A549 (cell line): ENCODE measurements at regions of chr17 and their contacts with region 1.

Region 1: GRCh38 chr17:19648475-19649406 is at the start of gene ALDH3A2:
- DNase-seq: peak; percentile 99
- ATAC-seq: peak; percentile 89 to 94
- H3K4me3 ChIP-seq: peak within 1 kb of the TSS; percentile 82
- H3K27ac ChIP-seq: peak within 1 kb of the TSS; percentile 95 to 96
- H3K4me1 ChIP-seq: peaks cover 67% of the 10 kb centered on the region
- CTCF ChIP-seq: peak; percentile 26; the same call in 1 of the 3 replicates
- EP300 ChIP-seq: no peak; a peak in 1 of 5 replicates
- POLR2A ChIP-seq: peak; percentile 77
- RAD21 ChIP-seq: peak; percentile 35 to 54; a peak in 4 of 5 replicates
- polyA plus RNA-seq, gene ALDH3A2: 195 and 225 TPM in 2 replicates

Region 2: DNA sequence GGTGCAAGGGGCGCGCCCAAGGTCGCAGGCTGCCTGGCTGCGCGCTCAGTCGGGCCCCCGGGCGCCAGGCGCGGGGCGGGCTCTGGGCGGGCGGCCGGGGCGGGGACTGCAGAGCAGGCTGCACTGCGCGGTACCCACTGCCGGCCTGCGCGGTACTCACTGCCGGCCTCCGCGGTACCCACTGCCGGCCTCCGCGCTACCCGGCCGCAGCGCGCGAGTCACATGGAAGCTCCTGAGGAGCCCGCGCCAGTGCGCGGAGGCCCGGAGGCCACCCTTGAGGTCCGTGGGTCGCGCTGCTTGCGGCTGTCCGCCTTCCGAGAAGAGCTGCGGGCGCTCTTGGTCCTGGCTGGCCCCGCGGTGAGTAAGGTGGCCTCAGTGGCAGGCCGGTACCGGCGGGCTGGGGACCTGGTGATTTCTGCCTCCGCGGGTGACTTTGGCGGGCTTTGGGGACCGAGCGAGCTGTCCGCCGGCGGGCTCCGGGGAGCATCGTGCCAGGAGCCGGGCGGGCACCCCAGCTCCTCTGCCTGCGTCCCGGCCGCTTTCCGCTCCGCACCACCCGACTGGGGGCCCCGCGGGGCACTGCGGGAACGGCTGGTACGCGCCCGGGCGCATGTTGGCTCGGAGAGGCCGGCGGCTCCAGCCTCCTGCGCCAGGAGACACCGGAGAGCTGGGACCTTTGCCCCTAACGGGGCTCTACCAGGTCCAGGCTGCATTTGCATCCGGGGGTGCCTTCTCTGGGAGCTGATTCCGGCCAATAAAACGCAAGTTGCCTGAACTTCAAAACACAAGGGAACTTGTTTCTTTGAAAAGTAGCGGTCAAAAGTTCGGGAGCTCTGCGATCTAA is 114.8 kb before region 1 on chr17 and contains the start of gene SLC47A1:
- CTCF ChIA-PET with region 1: interaction called, 10 read pairs
- POLR2A ChIA-PET with region 1: interaction called, 27 read pairs
- DNase-seq: peak; percentile 72 to 76
- ATAC-seq: peak; percentile 96 to 99
- H3K4me3 ChIP-seq: peak within 1 kb of the TSS; percentile 64
- H3K27ac ChIP-seq: peak within 1 kb of the TSS; percentile 75 to 89
- H3K4me1 ChIP-seq: peaks cover 10% of the 10 kb centered on the region; the same call in 2 of the 3 replicates
- CTCF ChIP-seq: no peak
- EP300 ChIP-seq: no peak
- POLR2A ChIP-seq: peak; percentile 83
- RAD21 ChIP-seq: no peak
- polyA plus RNA-seq, gene SLC47A1: 21.1 and 35.1 TPM in 2 replicates

Region 3: GRCh38 chr17:19630661-19631060 is 18.1 kb before region 1 on chr17:
- CTCF ChIA-PET with region 1: interaction called, 37 read pairs
- POLR2A ChIA-PET with region 1: interaction called, 4 read pairs
- DNase-seq: no peak
- ATAC-seq: no peak; a peak in 1 of 6 replicates
- H3K4me3 ChIP-seq: no peak overlapping the region
- H3K27ac ChIP-seq: 0 out of 6 replicates have a peak overlapping the region, but pooled peaks of 1 of the 2 experiments have one; percentile 6
- H3K4me1 ChIP-seq: peaks cover 21% of the 10 kb centered on the region
- CTCF ChIP-seq: no peak
- EP300 ChIP-seq: no peak
- POLR2A ChIP-seq: no peak
- RAD21 ChIP-seq: no peak

Region 4: DNA sequence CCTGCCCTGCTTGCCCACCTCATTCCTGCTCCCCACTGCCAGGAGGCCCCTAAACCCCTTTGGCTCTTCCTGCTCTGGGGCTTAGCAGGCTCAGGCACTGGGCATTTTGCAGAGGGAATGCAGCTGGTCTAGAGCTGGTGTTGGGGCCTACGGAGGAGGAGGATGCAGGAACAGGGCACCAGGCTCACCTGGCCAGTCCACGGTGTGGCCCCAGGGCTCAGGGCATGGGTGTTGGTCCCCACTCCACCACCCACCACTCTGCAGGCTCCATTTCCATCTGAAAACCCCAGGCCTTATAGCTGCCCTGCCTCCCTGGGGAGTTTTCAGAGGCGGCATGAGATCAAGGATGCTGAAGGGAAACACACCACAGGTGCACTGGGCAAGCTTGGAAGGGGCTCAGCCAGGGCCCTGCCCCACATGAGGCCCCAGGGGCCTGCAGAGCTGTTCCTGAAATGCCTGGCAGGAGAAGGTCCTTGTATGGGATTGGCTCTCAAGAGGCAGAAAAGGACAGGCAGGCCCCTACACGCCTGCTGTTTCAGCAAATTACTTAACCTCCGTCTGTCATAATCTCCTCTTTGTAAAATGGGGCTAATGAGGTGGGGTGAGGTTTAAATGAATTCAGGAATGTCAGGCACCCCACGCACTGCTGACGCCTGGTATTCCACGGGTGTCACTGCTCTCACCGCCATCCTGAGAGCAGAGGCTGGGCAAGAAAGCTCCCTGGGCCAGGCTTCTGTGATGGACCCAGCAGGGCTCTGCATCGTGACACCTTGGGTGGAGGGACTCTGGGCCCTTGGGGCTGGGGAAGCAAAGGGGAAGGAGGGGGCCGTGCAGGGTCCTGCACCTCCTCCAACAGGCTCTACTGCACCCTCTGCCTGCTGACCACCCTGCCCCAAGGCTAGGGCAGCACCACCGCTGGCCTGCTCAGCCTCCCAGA is 58.3 kb after region 1 on chr17:
- CTCF ChIA-PET with region 1: interaction called, 3 read pairs
- POLR2A ChIA-PET with region 1: interaction called, 11 read pairs
- DNase-seq: no peak
- ATAC-seq: peak in 1 of 2 experiments; percentile 6; a peak in 3 of 6 replicates
- H3K4me3 ChIP-seq: no peak overlapping the region
- H3K27ac ChIP-seq: peak overlapping the region in 1 of 2 experiments; percentile 25; a peak in 1 of 6 replicates
- H3K4me1 ChIP-seq: peaks cover 7% of the 10 kb centered on the region; the same call in 1 of the 3 replicates
- CTCF ChIP-seq: no peak
- EP300 ChIP-seq: no peak
- POLR2A ChIP-seq: no peak
- RAD21 ChIP-seq: no peak

Region 5: DNA sequence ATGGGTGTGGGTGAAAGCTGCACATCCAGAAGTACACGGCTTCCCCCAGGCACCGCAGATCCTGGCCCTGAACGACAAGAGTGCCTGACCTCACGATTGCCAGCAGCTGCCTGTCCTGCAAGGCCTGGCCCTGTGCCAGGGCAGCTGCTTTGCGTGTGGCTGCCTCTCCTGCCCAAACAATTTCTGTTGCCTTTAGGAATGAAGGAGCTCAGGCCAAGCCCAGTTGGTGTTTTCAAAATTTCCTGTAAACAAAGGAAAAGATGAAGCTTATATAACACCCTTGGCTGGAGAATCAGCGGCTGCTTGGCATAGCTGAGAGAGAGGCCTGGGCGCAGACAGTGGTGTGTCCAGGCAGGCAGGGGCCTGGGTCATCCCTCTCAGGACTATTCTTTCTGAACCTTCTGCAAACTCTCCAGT is 79.3 kb after region 1 on chr17:
- CTCF ChIA-PET with region 1: interaction called, 13 read pairs
- POLR2A ChIA-PET with region 1: interaction called, 18 read pairs
- DNase-seq: peak in 1 of 2 experiments; percentile 69
- ATAC-seq: peak; percentile 52 to 54; a peak in 5 of 6 replicates
- H3K4me3 ChIP-seq: no peak overlapping the region
- H3K27ac ChIP-seq: peak overlapping the region; percentile 67 to 82
- H3K4me1 ChIP-seq: peaks cover 35% of the 10 kb centered on the region
- CTCF ChIP-seq: no peak
- EP300 ChIP-seq: no peak
- POLR2A ChIP-seq: no peak
- RAD21 ChIP-seq: no peak

Region 6: DNA sequence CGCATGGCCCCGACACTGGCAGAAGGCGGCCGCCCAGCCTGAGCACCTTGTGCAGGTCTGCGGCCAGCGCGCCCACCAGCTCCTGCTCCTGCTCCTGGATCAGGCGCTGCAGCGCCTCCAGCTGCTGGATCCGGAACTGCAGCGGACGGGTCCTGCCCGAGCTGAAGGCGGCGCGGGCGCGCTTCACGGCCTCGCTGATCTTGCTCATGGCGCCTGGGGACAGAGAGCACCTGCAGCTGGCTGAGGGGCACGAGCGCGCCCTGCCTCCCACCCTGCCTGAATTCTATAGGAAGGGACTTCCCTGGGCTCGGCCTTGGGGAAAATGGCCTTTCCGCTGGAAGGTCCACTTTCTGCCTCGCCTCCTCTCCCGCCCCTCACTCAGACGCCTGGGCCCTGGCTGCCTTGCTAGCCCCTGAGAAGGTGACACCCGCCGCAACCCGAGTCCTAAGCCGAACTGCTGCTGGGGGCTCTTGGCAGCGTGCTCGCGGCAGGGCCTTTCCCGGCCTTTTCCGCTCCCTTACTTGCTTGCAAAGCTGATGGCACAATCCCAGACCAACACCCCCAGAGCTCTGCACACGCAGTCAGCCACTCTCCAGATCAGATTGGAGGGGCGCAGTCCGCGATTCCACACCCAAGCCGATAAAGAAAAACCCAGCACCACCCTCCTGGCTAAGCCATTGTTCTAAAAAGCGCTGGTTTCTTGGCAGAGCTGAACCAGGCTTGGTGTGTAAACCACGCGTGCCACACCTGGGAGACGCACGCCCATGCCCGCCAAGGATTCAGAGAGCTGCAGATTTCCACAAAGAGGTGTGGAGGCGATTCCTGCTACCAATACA is 96.4 kb after region 1 on chr17:
- CTCF ChIA-PET with region 1: interaction called, 21 read pairs
- POLR2A ChIA-PET with region 1: interaction called, 98 read pairs
- DNase-seq: peak; percentile 75 to 89
- ATAC-seq: peak; percentile 12 to 62; a peak in 5 of 6 replicates
- H3K4me3 ChIP-seq: peak overlapping the region; percentile 53; the same call in 2 of the 3 replicates
- H3K27ac ChIP-seq: peak overlapping the region; percentile 98 to 100
- H3K4me1 ChIP-seq: peaks cover 80% of the 10 kb centered on the region
- CTCF ChIP-seq: peak; percentile 81
- EP300 ChIP-seq: no peak
- POLR2A ChIP-seq: peak; percentile 52
- RAD21 ChIP-seq: peak; percentile 55 to 64